ENCODE measurements at regions of chr6 and their contacts with region 1.

Region 1: GRCh38 chr6:52419809-52420670 is at the start of gene EFHC1:
- DNase-seq: peak; percentile 98 to 99
- H3K4me3 ChIP-seq: peak within 1 kb of the TSS; percentile 73 to 86
- H3K27ac ChIP-seq: peak within 1 kb of the TSS; percentile 84 to 89
- H3K4me1 ChIP-seq: no peaks in the 10 kb centered on the region
- H3K27me3 ChIP-seq: no peaks in the 10 kb centered on the region
- CTCF ChIP-seq: peak in 2 of 4 experiments; percentile 4 to 17
- POLR2A ChIP-seq: peak; percentile 67 to 90
- total RNA-seq, gene EFHC1: 15.6 to 63.0 (median 29.5) TPM

Region 2: GRCh38 chr6:52186480-52186879 is 233.6 kb before region 1 on chr6:
- intact Hi-C with region 1: no loop called
- DNase-seq: no peak
- H3K4me3 ChIP-seq: no peak overlapping the region
- H3K27ac ChIP-seq: no peak overlapping the region
- H3K4me1 ChIP-seq: no peaks in the 10 kb centered on the region
- H3K27me3 ChIP-seq: no peaks in the 10 kb centered on the region
- CTCF ChIP-seq: no peak
- POLR2A ChIP-seq: no peak

Region 3: DNA sequence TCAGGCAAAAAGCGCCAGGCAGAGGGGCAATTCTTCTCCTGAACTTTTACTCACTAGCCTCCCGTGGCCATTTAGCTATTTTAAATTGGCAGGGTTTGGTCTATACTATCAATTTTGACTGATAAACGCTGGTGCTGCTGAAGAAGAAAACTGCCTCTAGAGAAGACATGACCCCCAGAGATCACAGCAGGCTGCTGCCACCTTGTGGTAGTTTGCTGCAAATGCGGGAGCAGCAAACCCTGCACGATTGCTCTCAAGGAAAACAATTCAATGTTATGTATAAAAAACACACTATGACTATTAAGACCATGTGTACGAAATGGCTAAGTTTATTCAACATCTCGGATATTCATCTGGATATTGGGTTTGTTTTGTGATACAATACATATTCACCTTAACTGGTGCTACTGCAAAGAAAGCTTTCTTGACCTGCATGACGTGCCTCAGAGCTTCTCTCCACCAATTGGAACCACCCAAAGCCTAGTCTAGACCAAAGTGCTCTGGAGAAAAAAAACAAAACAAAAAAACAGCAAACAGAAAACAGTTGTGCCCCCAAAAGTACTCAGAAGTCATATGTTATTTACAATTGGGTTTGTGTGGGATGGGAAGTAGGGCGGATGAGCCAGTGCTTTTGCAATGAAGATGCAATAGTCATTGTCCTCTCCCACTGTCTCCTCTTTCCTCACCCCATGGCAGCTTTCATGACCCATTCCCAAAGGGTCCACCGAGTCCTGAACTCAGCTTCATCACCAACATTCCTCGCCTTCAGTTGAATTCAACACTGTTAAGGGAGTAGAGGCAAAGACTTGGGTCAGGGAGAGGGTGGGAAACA is 156.1 kb before region 1 on chr6:
- intact Hi-C with region 1: no loop called
- DNase-seq: peak; percentile 30 to 58
- H3K4me3 ChIP-seq: no peak overlapping the region
- H3K27ac ChIP-seq: no peak overlapping the region
- H3K4me1 ChIP-seq: no peaks in the 10 kb centered on the region
- H3K27me3 ChIP-seq: no peaks in the 10 kb centered on the region
- CTCF ChIP-seq: peak; percentile 66 to 92 (median 74)
- POLR2A ChIP-seq: no peak

Region 4: GRCh38 chr6:52284460-52285176 is 135.4 kb before region 1 on chr6 and contains the start of gene MCM3:
- intact Hi-C with region 1: no loop called
- DNase-seq: peak; percentile 97 to 98
- H3K4me3 ChIP-seq: peak within 1 kb of the TSS; percentile 67 to 73
- H3K27ac ChIP-seq: peak within 1 kb of the TSS; percentile 76 to 78
- H3K4me1 ChIP-seq: no peaks in the 10 kb centered on the region
- H3K27me3 ChIP-seq: no peaks in the 10 kb centered on the region
- CTCF ChIP-seq: peak; percentile 19 to 40 (median 26)
- POLR2A ChIP-seq: peak in 1 of 2 donors; percentile 43
- total RNA-seq, gene MCM3: 21.8 to 120 (median 64.7) TPM

Region 5: DNA sequence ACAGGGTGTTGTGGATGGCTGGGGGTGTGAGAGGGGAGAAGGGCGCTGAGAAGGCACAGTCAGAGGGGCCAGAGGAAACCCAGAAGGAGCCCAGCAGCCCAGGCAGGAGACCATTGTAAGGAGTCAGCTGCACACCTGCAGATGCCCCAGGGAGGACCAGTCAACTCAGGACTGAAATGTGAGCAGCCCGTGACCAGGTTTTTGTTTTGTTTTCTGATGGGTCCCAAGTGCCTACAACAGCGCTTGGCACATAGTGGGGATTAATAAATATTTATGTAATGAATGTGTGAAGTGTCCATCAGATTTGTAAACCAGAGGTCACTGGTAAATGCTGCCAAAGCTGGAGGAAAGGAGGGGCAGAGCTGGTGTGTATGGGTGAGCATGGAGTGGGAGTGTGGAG is 126.6 kb after region 1 on chr6:
- intact Hi-C with region 1: no loop called
- DNase-seq: no peak
- H3K4me3 ChIP-seq: no peak overlapping the region
- H3K27ac ChIP-seq: no peak overlapping the region
- H3K4me1 ChIP-seq: peaks cover 3 to 26% of the 10 kb centered on the region in 2 donors
- H3K27me3 ChIP-seq: no peaks in the 10 kb centered on the region
- CTCF ChIP-seq: no peak
- POLR2A ChIP-seq: no peak

Region 6: GRCh38 chr6:52598123-52598823 is 178.2 kb after region 1 on chr6:
- intact Hi-C with region 1: loop called (anchors 5 kb)
- DNase-seq: peak; percentile 69 to 78
- H3K4me3 ChIP-seq: no peak overlapping the region
- H3K27ac ChIP-seq: peak overlapping the region; percentile 49 to 52
- H3K4me1 ChIP-seq: peaks cover 0 to 5% of the 10 kb centered on the region in 2 donors
- H3K27me3 ChIP-seq: no peaks in the 10 kb centered on the region
- CTCF ChIP-seq: peak; percentile 60 to 75 (median 70)
- POLR2A ChIP-seq: no peak

Region 7: DNA sequence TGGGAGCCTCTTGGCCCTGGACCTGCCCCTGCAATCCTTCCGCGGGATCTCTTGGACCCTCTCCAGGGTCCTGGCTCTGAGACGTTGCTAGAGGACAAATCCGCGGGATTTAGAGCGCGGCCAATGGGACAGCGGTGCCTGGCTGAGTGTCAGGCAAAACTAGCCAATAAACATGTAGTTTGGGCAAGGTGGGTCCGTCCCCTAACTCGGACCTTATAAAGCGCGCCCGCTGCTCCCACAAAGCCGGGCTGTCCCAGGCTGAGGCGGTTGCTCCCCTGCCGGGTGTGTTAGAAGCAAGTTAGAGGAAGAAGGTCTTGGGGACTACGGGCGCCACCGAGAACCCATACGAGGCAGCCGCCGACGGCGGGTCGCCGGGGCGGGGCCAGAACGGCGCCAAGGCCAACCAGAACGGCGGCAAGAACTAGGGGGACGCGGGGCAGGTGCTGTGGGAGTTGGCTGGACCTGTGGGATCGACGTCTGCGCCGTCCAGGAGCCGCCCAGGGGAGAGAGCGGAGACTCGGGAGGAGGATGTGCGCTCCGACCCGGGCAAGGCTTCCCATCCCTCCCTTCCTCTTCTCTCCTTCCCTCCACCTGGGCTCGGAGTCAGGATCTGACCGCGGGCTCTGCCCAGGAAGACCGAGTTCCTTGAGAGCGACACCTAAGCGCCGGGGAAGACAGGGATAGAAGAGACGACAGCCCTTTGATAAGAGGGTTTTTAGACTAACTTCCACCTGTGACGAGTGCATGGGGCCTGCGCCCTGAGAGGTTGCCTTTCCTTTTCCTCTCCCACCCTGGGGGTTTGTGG is 244.3 kb after region 1 on chr6:
- intact Hi-C with region 1: loop called (anchors 2 kb)
- DNase-seq: peak; percentile 81 to 91
- H3K4me3 ChIP-seq: peak overlapping the region; percentile 64 to 81
- H3K27ac ChIP-seq: peak overlapping the region; percentile 77 to 78
- H3K4me1 ChIP-seq: no peaks in the 10 kb centered on the region
- H3K27me3 ChIP-seq: no peaks in the 10 kb centered on the region
- CTCF ChIP-seq: no peak
- POLR2A ChIP-seq: peak; percentile 69 to 74